WTC11 (cell line): ENCODE measurements at regions of chr12 and their contacts with region 1.

Region 1: GRCh38 chr12:3275171-3276041 is 198.2 kb downstream of the TSPAN9 start:
- DNase-seq: peak; percentile 88
- ATAC-seq: peak; percentile 79
- H3K4me3 Mint-ChIP-seq: peak overlapping the region; percentile 59
- H3K27ac Mint-ChIP-seq: no peak overlapping the region
- H3K4me1 Mint-ChIP-seq: peaks cover 20% of the 10 kb centered on the region
- H3K27me3 Mint-ChIP-seq: no peaks in the 10 kb centered on the region
- CTCF ChIP-seq: peak; percentile 97

Region 2: GRCh38 chr12:3073438-3074250 is 201.8 kb before region 1 on chr12:
- CTCF ChIA-PET with region 1: interaction called, 45 read pairs
- POLR2A ChIA-PET with region 1: interaction called, 3 read pairs
- DNase-seq: peak; percentile 92
- ATAC-seq: peak; percentile 48
- H3K4me3 Mint-ChIP-seq: no peak overlapping the region
- H3K27ac Mint-ChIP-seq: no peak overlapping the region
- H3K4me1 Mint-ChIP-seq: peaks cover 8% of the 10 kb centered on the region
- H3K27me3 Mint-ChIP-seq: peaks cover 19% of the 10 kb centered on the region
- CTCF ChIP-seq: peak; percentile 90

Region 3: GRCh38 chr12:3135522-3136461 is 139.6 kb before region 1 on chr12:
- CTCF ChIA-PET with region 1: interaction called, 168 read pairs
- POLR2A ChIA-PET with region 1: interaction called, 4 read pairs
- DNase-seq: peak; percentile 64
- ATAC-seq: peak; percentile 72
- H3K4me3 Mint-ChIP-seq: no peak overlapping the region
- H3K27ac Mint-ChIP-seq: no peak overlapping the region
- H3K4me1 Mint-ChIP-seq: peaks cover 61% of the 10 kb centered on the region
- H3K27me3 Mint-ChIP-seq: no peaks in the 10 kb centered on the region
- CTCF ChIP-seq: peak; percentile 82

Region 4: GRCh38 chr12:3197131-3197818 is 78.1 kb before region 1 on chr12:
- CTCF ChIA-PET with region 1: interaction called, 243 read pairs
- POLR2A ChIA-PET with region 1: interaction called, 3 read pairs
- DNase-seq: no peak
- ATAC-seq: no peak
- H3K4me3 Mint-ChIP-seq: no peak overlapping the region
- H3K27ac Mint-ChIP-seq: no peak overlapping the region
- H3K4me1 Mint-ChIP-seq: peaks cover 41% of the 10 kb centered on the region
- H3K27me3 Mint-ChIP-seq: peaks cover 31% of the 10 kb centered on the region
- CTCF ChIP-seq: no peak

Region 5: GRCh38 chr12:3225154-3225795 is 50.1 kb before region 1 on chr12:
- CTCF ChIA-PET with region 1: interaction called, 15 read pairs
- POLR2A ChIA-PET with region 1: no interaction called
- DNase-seq: no peak
- ATAC-seq: no peak
- H3K4me3 Mint-ChIP-seq: no peak overlapping the region
- H3K27ac Mint-ChIP-seq: no peak overlapping the region
- H3K4me1 Mint-ChIP-seq: peaks cover 33% of the 10 kb centered on the region
- H3K27me3 Mint-ChIP-seq: no peaks in the 10 kb centered on the region
- CTCF ChIP-seq: no peak

Region 6: GRCh38 chr12:3242199-3242863 is 33.1 kb before region 1 on chr12:
- CTCF ChIA-PET with region 1: interaction called, 20 read pairs
- POLR2A ChIA-PET with region 1: no interaction called
- DNase-seq: no peak
- ATAC-seq: peak; percentile 58
- H3K4me3 Mint-ChIP-seq: no peak overlapping the region
- H3K27ac Mint-ChIP-seq: no peak overlapping the region
- H3K4me1 Mint-ChIP-seq: peaks cover 3% of the 10 kb centered on the region
- H3K27me3 Mint-ChIP-seq: no peaks in the 10 kb centered on the region
- CTCF ChIP-seq: no peak

Region 7: GRCh38 chr12:3409662-3410061 is 134.3 kb after region 1 on chr12:
- CTCF ChIA-PET with region 1: no interaction called
- POLR2A ChIA-PET with region 1: no interaction called
- DNase-seq: no peak
- ATAC-seq: no peak; the same call in none of the 2 replicates
- H3K4me3 Mint-ChIP-seq: no peak overlapping the region
- H3K27ac Mint-ChIP-seq: no peak overlapping the region
- H3K4me1 Mint-ChIP-seq: no peaks in the 10 kb centered on the region
- H3K27me3 Mint-ChIP-seq: peaks cover 16% of the 10 kb centered on the region
- CTCF ChIP-seq: no peak

Region 8: GRCh38 chr12:3725388-3726115 is 450.1 kb after region 1 on chr12:
- CTCF ChIA-PET with region 1: no interaction called
- POLR2A ChIA-PET with region 1: no interaction called
- DNase-seq: no peak
- ATAC-seq: no peak
- H3K4me3 Mint-ChIP-seq: no peak overlapping the region
- H3K27ac Mint-ChIP-seq: no peak overlapping the region
- H3K4me1 Mint-ChIP-seq: peaks cover 21% of the 10 kb centered on the region
- H3K27me3 Mint-ChIP-seq: peaks cover 3% of the 10 kb centered on the region; the same call in 1 of the 2 replicates
- CTCF ChIP-seq: no peak